PC-9 (cell line): ENCODE measurements at regions of chr4 and their contacts with region 1.

Region 1: GRCh38 chr4:84596826-84597225 is 13.9 kb downstream of the CDS1 start:
- DNase-seq: peak in 1 of 2 experiments; percentile 65
- H3K4me3 ChIP-seq: 0 out of 2 replicates have a peak overlapping the region, but pooled peaks have one; percentile 2
- H3K27ac ChIP-seq: peak overlapping the region; percentile 97
- H3K4me1 ChIP-seq: peaks cover 59% of the 10 kb centered on the region
- H3K27me3 ChIP-seq: no peaks in the 10 kb centered on the region
- CTCF ChIP-seq: no peak

Region 2: GRCh38 chr4:84530871-84531270 is 66.0 kb before region 1 on chr4:
- CTCF ChIA-PET with region 1: no interaction called
- POLR2A ChIA-PET with region 1: no interaction called
- intact Hi-C with region 1: loop called (anchors 5 kb)
- DNase-seq: peak; percentile 20 to 86
- H3K4me3 ChIP-seq: no peak overlapping the region
- H3K27ac ChIP-seq: peak overlapping the region; percentile 88
- H3K4me1 ChIP-seq: peaks cover 40% of the 10 kb centered on the region
- H3K27me3 ChIP-seq: no peaks in the 10 kb centered on the region
- CTCF ChIP-seq: no peak

Region 3: GRCh38 chr4:84569009-84569408 is 27.8 kb before region 1 on chr4:
- CTCF ChIA-PET with region 1: no interaction called
- POLR2A ChIA-PET with region 1: interaction called, 13 read pairs
- intact Hi-C with region 1: no loop called
- DNase-seq: no peak
- H3K4me3 ChIP-seq: no peak overlapping the region
- H3K27ac ChIP-seq: no peak overlapping the region
- H3K4me1 ChIP-seq: peaks cover 14% of the 10 kb centered on the region
- H3K27me3 ChIP-seq: no peaks in the 10 kb centered on the region
- CTCF ChIP-seq: no peak

Region 4: DNA sequence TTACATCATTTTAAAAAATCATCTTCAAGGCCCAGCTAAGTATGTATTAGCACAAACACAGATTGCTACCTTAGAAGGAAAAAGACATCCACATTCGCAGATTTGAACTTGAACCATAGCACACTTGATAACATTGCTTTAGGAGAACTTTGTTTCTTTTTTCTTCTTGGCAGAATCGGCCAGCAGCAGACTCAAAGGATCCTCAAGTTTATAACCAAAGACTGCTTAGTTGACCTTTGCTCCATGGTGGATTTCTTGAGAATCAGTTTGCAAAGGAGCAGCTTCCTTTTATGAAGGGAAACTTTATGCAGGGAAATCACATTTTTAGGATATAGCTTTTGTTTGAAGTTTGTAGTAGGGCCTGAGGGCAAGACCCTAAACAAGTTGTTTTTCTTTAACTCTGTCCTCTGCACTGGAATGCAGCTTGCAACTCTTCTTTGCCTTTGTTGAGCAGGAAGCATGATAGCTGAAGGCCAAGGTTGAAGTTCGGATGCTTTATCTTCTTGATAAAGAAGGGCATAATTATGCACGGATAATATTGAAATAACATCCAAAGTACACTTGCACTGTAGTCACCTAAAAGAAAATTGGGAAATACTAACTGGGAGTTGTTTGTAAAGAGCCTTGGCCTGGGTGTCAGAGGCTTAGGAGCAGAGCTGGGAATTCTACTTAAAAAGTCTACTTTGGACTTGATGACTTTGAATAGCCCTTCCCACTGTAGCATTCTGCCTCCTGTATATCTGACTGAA is 64.5 kb after region 1 on chr4:
- CTCF ChIA-PET with region 1: no interaction called
- POLR2A ChIA-PET with region 1: no interaction called
- intact Hi-C with region 1: no loop called
- DNase-seq: no peak
- H3K4me3 ChIP-seq: no peak overlapping the region
- H3K27ac ChIP-seq: no peak overlapping the region
- H3K4me1 ChIP-seq: no peaks in the 10 kb centered on the region
- H3K27me3 ChIP-seq: no peaks in the 10 kb centered on the region
- CTCF ChIP-seq: no peak

Region 5: GRCh38 chr4:85700362-85700761 is 1103.5 kb after region 1 on chr4:
- CTCF ChIA-PET with region 1: no interaction called
- POLR2A ChIA-PET with region 1: interaction called, 25 read pairs
- intact Hi-C with region 1: no loop called
- DNase-seq: no peak
- H3K4me3 ChIP-seq: no peak overlapping the region
- H3K27ac ChIP-seq: no peak overlapping the region
- H3K4me1 ChIP-seq: no peaks in the 10 kb centered on the region
- H3K27me3 ChIP-seq: no peaks in the 10 kb centered on the region
- CTCF ChIP-seq: no peak